BJ (cell line): ENCODE measurements at regions of chr6 and their contacts with region 1.

Region 1: DNA sequence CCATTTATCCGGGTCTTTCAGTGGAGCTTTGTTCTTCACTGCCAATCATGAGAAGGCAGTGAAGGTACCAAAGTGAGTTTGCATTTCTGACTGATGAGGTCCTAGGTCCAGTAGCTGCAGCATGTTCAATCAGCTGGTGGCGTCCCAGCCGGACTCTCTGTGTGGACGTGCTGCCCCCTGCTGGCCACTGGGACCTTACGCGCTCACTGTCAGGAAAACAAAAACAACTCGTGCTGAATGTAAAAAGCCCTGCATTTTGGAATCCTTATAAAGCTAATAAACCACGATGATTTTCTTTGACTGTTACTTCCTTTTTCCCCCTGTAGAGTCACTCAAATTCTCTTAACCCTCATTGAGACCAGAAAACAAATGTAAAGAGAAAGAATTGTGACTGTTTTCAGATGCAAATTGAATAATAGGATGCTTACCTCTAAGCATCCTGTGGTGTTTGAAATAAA is 4.9 kb upstream of the CD24 start:
- DNase-seq: no peak
- H3K4me3 ChIP-seq: no peak overlapping the region
- H3K27me3 ChIP-seq: peaks cover 15% of the 10 kb centered on the region
- CTCF ChIP-seq: peak; percentile 97

Region 2: DNA sequence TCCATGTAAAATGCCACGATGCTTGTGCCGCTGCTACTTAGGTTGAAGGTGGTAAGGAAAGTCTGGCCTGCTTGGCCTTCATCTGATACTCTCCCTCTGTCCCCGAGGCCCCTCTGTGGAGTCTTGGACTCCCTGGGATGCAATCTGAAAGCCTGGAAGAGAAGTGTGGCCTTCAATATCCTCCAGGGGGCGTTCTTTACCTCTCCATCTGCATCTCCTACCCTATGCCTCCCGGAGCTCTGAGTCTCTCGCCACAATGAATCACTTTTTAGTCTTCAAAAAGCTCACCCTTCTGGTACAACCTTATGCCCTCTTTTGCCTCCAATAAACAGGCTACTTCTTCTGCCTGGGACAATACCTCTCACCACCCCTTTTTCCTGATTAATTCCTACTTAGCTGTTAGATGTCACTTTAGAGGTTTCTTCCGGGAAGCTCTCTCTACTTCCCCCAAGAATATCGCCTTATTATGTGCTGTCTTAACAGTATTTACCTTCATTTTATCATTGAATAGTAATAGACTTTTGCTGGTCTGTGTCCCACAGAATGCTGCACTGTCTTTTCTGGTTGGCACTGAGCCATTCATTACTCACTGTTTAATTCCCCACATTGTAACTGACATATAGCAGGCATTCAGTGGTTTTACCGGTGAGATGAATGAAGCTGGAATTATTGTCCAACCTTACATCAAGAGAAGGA is 640.0 kb before region 1 on chr6:
- CTCF ChIA-PET with region 1: interaction called, 25 read pairs
- POLR2A ChIA-PET with region 1: no interaction called
- DNase-seq: peak; percentile 8
- H3K4me3 ChIP-seq: no peak overlapping the region
- H3K27me3 ChIP-seq: peaks cover 2% of the 10 kb centered on the region
- CTCF ChIP-seq: peak; percentile 87

Region 3: GRCh38 chr6:106444777-106445507 is 534.5 kb before region 1 on chr6:
- CTCF ChIA-PET with region 1: interaction called, 25 read pairs
- POLR2A ChIA-PET with region 1: no interaction called
- DNase-seq: no peak
- H3K4me3 ChIP-seq: no peak overlapping the region
- H3K27me3 ChIP-seq: peaks cover 10% of the 10 kb centered on the region
- CTCF ChIP-seq: peak; percentile 70

Region 4: GRCh38 chr6:106560996-106561685 is 418.3 kb before region 1 on chr6:
- CTCF ChIA-PET with region 1: interaction called, 11 read pairs
- POLR2A ChIA-PET with region 1: no interaction called
- DNase-seq: no peak
- H3K4me3 ChIP-seq: no peak overlapping the region
- H3K27me3 ChIP-seq: no peaks in the 10 kb centered on the region
- CTCF ChIP-seq: no peak

Region 5: DNA sequence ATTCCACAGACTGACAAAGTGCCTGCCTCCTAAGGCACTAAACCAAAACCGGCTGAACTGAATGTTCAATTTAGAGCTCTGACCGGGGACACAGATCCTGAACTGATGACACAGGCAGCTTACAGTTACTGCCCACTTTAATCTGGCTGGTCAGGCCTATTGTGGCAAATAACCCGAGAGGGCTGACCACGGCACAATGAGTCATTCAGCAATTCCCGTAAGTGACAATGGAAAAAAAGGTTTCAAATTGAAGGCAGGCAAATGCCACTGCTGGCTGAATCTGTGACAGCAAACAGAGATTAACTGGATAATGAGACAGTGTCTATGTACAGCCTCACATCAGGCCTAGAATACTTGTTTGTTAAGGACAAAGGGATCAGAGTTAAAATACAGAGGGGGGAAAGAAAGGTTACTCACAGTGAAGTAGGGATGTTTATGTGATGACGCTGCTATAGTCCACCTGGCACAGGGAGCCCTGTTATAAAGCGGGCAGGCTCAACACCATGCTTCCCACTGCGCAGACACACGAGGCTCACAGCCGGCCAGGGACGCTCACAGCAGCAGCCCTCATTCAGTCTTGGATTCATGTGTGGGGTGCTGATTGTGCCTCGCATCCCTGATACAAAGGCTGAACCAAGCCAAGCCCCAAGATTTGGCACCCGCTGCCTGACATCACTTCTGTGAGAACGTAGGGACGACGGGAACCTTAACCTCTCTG is 404.6 kb before region 1 on chr6:
- CTCF ChIA-PET with region 1: interaction called, 11 read pairs
- POLR2A ChIA-PET with region 1: no interaction called
- DNase-seq: no peak
- H3K4me3 ChIP-seq: no peak overlapping the region
- H3K27me3 ChIP-seq: no peaks in the 10 kb centered on the region; the same call in 1 of the 2 replicates
- CTCF ChIP-seq: no peak

Region 6: DNA sequence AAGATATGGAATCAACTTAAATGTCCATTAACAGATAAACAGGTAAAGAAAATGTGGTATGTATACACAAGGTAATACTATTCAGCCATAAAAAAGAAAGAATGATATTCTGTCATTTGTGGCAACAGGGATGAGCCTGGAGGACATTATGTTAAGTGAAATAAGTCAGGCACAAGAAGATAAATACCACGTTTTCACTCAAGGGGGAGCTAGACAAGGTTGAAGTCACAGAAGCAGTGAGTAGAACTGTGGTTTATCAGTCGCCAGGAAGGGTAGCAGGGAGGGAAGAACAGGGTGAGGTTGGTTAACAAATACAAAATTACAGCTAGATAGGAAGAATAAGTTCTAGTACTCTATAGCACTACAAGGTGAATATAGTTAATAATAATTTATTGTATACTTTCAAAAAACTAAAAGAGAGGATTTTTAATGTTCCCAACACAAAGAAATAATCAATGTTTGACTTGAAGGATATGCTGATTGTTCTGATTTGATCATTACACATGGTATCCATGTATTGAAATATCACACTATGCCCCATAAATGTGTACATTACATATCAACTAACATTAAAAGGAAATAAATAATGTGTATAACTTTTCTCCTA is 371.3 kb before region 1 on chr6:
- CTCF ChIA-PET with region 1: interaction called, 17 read pairs
- POLR2A ChIA-PET with region 1: no interaction called
- DNase-seq: no peak
- H3K4me3 ChIP-seq: no peak overlapping the region
- H3K27me3 ChIP-seq: no peaks in the 10 kb centered on the region
- CTCF ChIP-seq: peak; percentile 56

Region 7: GRCh38 chr6:107102414-107102990 is 123.0 kb after region 1 on chr6:
- CTCF ChIA-PET with region 1: no interaction called
- POLR2A ChIA-PET with region 1: no interaction called
- DNase-seq: no peak
- H3K4me3 ChIP-seq: no peak overlapping the region
- H3K27me3 ChIP-seq: no peaks in the 10 kb centered on the region
- CTCF ChIP-seq: no peak